ENCODE measurements at regions of chr2 and their contacts with region 1.

Region 1: GRCh38 chr2:203814661-203815540 is 52.7 kb upstream of the CTLA4 start:
- DNase-seq: peak; percentile 75
- CTCF ChIP-seq: peak; percentile 71

Region 2: GRCh38 chr2:203453858-203454451 is 360.9 kb before region 1 on chr2:
- CTCF ChIA-PET with region 1: interaction called, 13 read pairs
- POLR2A ChIA-PET with region 1: no interaction called
- DNase-seq: peak; percentile 57
- CTCF ChIP-seq: peak; percentile 64

Region 3: DNA sequence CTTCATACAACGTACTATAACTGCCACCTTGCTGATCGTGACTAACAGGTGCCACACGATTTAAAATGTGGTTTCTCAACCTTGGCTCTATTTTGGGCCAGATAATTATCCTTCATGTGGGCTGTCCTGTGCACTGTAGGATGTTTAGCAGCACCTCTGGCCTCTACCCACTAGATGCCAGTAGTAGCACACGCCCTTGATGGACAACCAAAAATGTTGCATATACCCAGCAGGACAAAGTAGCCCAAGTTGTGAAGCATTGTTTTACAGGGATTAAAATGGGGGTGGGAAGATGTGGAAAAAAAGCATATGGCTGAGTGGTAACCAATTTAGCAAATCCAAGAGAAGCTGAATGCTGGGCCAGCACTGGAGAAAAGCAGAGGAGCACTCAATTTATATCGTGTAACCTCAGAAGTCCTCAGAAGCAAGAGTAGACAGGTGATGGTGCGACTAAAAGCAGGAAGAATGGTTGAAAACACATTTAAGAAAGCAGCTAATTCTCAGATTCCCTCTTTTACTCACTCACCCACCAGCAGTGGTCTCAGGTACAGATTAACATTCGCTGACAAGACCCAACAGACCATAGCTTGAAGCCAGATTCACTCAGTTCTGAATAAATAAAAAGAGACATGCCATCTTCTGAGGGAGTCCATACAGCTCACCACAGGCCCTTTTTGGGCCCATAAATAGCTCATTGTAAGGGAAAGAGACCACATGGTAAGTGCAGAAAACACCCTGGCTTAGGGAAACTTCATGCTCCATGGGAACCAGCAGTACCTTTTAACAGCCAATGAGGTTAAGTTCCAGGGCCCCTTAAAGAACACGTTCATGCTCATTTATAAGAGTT is 330.4 kb before region 1 on chr2:
- CTCF ChIA-PET with region 1: interaction called, 63 read pairs
- POLR2A ChIA-PET with region 1: no interaction called
- DNase-seq: peak; percentile 23
- CTCF ChIP-seq: peak; percentile 72

Region 4: GRCh38 chr2:203650860-203651613 is 163.9 kb before region 1 on chr2:
- CTCF ChIA-PET with region 1: interaction called, 13 read pairs
- POLR2A ChIA-PET with region 1: no interaction called
- DNase-seq: no peak
- CTCF ChIP-seq: peak; percentile 20

Region 5: GRCh38 chr2:203804070-203804469 is 10.8 kb before region 1 on chr2:
- CTCF ChIA-PET with region 1: interaction called, 44 read pairs
- POLR2A ChIA-PET with region 1: interaction called, 3 read pairs
- DNase-seq: no peak
- CTCF ChIP-seq: no peak

Region 6: GRCh38 chr2:204691911-204692510 is 877.1 kb after region 1 on chr2:
- CTCF ChIA-PET with region 1: no interaction called
- POLR2A ChIA-PET with region 1: no interaction called
- DNase-seq: peak; percentile 15
- CTCF ChIP-seq: peak; percentile 56

Measured in GM10248 (cell line).